ENCODE measurements at regions of chr7 and their contacts with region 1.

Region 1: GRCh38 chr7:2680792-2681490 is 7.1 kb upstream of the AMZ1 start:
- DNase-seq: no peak
- H3K4me3 ChIP-seq: no peak overlapping the region
- H3K27ac ChIP-seq: no peak overlapping the region
- H3K4me1 ChIP-seq: peaks cover 0 to 13% (median 8%) of the 10 kb centered on the region in 4 donors
- H3K27me3 ChIP-seq: peaks cover 0 to 72% (median 2%) of the 10 kb centered on the region in 4 donors
- CTCF ChIP-seq: peak; percentile 59 to 69 (median 60)
- EP300 ChIP-seq: no peak
- POLR2A ChIP-seq: no peak

Region 2: GRCh38 chr7:2451171-2452073 is 229.5 kb before region 1 on chr7:
- intact Hi-C with region 1: loop called (anchors 10 kb)
- DNase-seq: no peak
- H3K4me3 ChIP-seq: peak overlapping the region; percentile 48 to 56 (median 50)
- H3K27ac ChIP-seq: no peak overlapping the region
- H3K4me1 ChIP-seq: peaks cover 13 to 16% (median 15%) of the 10 kb centered on the region in 4 donors
- H3K27me3 ChIP-seq: no peaks in the 10 kb centered on the region
- CTCF ChIP-seq: peak; percentile 78 to 86 (median 79)
- EP300 ChIP-seq: no peak
- POLR2A ChIP-seq: no peak

Region 3: GRCh38 chr7:2567679-2568278 is 113.2 kb before region 1 on chr7:
- intact Hi-C with region 1: loop called (anchors 5 kb)
- DNase-seq: no peak
- H3K4me3 ChIP-seq: peak overlapping the region in 1 of 4 donors; percentile 20
- H3K27ac ChIP-seq: no peak overlapping the region
- H3K4me1 ChIP-seq: peaks cover 0 to 18% (median 11%) of the 10 kb centered on the region in 4 donors
- H3K27me3 ChIP-seq: no peaks in the 10 kb centered on the region
- CTCF ChIP-seq: peak; percentile 33 to 50 (median 34)
- EP300 ChIP-seq: no peak
- POLR2A ChIP-seq: no peak

Measured in esophagus muscularis mucosa (tissue), 4 donors.